ENCODE measurements at regions of chr4 and their contacts with region 1.

Region 1: DNA sequence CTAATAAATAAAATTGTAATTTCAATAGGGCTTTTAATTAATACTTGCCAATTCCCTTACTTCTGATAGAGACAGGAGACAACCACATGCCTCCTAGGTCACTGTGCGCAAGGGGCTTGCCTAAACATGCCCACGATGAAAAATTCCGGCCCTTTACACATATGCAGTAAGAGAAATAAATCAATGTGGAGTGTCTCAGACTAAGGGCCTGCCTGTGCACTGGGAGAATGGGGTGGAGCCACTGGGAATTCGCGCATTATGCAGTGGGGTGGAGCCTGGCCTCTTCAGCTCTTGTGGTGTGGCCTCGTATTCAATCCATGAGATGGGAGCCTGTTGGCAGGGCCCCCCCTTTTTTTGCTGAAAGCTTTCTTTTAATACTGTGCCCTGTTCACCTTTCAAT is 484.5 kb downstream of the PDGFC start:
- DNase-seq: no peak

Region 2: GRCh38 chr4:156547439-156547838 is 60.3 kb after region 1 on chr4:
- intact Hi-C with region 1: loop called in 1 of 2 experiments (anchors 10 kb)
- DNase-seq: no peak